ENCODE measurements at regions of chr1 and their contacts with region 1.

Region 1: DNA sequence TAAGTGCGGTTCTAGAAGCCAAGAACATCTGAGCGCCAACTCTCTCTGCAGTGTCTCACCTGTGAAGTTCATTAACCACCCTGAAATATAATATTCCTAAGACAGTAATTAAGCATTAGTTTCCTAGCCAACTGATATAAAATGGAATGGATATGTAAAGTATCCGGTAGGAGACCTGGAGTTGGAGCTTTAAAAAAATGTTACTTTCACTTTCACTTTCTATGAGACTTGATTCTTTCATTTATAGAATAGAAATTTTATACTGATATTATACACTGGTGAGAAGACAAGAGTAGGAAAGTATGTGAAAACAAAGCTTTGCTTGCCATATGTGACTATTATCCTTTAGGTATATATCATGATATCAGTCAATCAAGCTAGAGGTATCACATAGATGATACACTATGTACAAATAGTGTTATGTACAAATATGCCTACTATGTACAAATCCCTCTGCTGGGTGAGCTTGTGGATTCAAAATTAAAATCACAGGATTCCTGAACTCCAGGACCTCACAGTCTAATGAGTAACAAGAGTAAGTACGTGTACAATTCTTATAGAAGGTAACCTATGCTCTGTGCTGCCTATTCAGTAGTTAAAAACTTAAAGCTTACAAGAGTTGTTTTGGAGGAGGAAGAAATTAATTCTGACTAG is 934.2 kb downstream of the TTLL7 start:
- DNase-seq: no peak

Region 2: GRCh38 chr1:83849191-83850061 is 784.7 kb after region 1 on chr1:
- intact Hi-C with region 1: loop called in 1 of 2 experiments (anchors 5 kb)
- DNase-seq: no peak